Heart left ventricle (tissue), 16 donors: ENCODE measurements at regions of chr18 and their contacts with region 1.

Region 1: DNA sequence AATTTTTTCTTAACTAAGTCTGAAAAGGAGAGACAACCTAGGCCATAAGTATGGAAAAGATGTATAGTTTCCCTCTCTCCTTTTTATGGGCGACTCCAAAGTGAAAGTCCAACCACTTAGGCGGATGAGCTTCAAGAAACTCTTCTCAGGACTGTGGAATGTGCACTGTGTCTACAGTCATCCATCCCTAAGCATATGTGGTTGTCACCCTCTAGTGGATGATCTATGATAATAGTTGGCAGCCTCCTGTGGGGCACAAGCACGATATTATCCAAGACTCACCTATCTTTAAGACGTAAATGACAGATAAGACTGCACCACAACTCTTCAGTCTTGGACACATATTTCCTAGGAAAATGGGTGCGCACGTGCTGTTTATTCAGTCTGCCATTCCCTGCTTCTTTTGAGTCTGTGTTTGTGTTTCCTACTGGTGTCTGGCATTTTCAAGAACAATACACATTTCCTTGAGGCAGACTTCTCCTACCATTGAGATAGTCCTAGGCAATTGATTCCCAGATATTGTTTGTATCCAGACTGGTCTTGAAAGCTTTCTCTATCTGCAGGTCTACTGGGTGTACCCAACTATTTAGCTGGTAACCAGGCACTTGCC is 145.5 kb upstream of the CTAGE1 start:
- DNase-seq: peak in 2 of 5 donors; percentile 50 to 64
- ATAC-seq: peak; percentile 72 to 80 (median 76)
- H3K4me3 ChIP-seq: peak overlapping the region; percentile 10 to 65 (median 54)
- H3K27ac ChIP-seq: peak overlapping the region; percentile 91 to 99 (median 98)
- H3K4me1 ChIP-seq: peaks cover 0 to 24% (median 7%) of the 10 kb centered on the region in 12 donors
- H3K27me3 ChIP-seq: peaks cover 0 to 28% (median 0%) of the 10 kb centered on the region in 9 donors
- CTCF ChIP-seq: peak; percentile 60 to 85 (median 82)
- POLR2A ChIP-seq: peak in 1 of 2 donors; percentile 34

Region 2: DNA sequence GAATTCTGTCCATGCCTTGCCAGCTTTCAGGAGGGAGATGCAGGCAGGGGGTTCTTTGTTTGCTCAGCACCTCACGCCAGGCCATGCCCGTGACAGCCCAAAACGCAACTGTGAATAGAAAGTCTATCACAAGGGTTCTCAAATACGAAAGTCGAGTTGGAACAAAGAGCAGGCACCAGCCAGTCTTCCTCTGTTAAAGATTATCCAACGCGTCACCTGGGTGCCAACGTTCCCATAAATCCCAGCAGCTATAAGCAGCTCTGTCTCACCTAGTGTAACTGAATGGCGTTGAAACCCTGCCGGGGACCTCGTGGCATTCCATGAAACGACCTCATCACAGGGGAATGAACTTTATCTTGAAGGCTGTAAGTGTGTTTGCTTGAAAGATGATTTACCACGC is 478.7 kb before region 1 on chr18:
- intact Hi-C with region 1: loop called in 1 of 10 experiments (anchors 10 kb)
- DNase-seq: peak in 4 of 5 donors; percentile 60 to 68 (median 68)
- ATAC-seq: peak; percentile 55 to 86 (median 80)
- H3K4me3 ChIP-seq: no peak overlapping the region
- H3K27ac ChIP-seq: peak overlapping the region in 9 of 12 donors; percentile 49 to 86 (median 62)
- H3K4me1 ChIP-seq: peaks cover 0 to 22% (median 4%) of the 10 kb centered on the region in 12 donors
- H3K27me3 ChIP-seq: no peaks in the 10 kb centered on the region
- CTCF ChIP-seq: no peak
- POLR2A ChIP-seq: no peak

Region 3: GRCh38 chr18:22194151-22194598 is 369.0 kb before region 1 on chr18:
- intact Hi-C with region 1: loop called in 2 of 10 experiments (anchors 5 kb)
- DNase-seq: peak in 3 of 5 donors; percentile 51 to 60 (median 55)
- ATAC-seq: peak; percentile 18 to 68 (median 50)
- H3K4me3 ChIP-seq: peak overlapping the region in 8 of 12 donors; percentile 3 to 40 (median 8)
- H3K27ac ChIP-seq: peak overlapping the region; percentile 11 to 100 (median 81)
- H3K4me1 ChIP-seq: peaks cover 8 to 98% (median 70%) of the 10 kb centered on the region in 12 donors
- H3K27me3 ChIP-seq: no peaks in the 10 kb centered on the region
- CTCF ChIP-seq: no peak
- POLR2A ChIP-seq: no peak

Region 4: GRCh38 chr18:22324191-22325131 is 238.7 kb before region 1 on chr18:
- intact Hi-C with region 1: loop called in 2 of 10 experiments (anchors 2 to 10 kb)
- DNase-seq: peak; percentile 72 to 90 (median 83)
- ATAC-seq: peak; percentile 85 to 90 (median 86)
- H3K4me3 ChIP-seq: peak overlapping the region in 10 of 12 donors; percentile 1 to 49 (median 34)
- H3K27ac ChIP-seq: peak overlapping the region; percentile 17 to 80 (median 62)
- H3K4me1 ChIP-seq: peaks cover 0 to 32% (median 12%) of the 10 kb centered on the region in 12 donors
- H3K27me3 ChIP-seq: no peaks in the 10 kb centered on the region
- CTCF ChIP-seq: peak in 7 of 12 donors; percentile 12 to 46 (median 42)
- POLR2A ChIP-seq: no peak

Region 5: DNA sequence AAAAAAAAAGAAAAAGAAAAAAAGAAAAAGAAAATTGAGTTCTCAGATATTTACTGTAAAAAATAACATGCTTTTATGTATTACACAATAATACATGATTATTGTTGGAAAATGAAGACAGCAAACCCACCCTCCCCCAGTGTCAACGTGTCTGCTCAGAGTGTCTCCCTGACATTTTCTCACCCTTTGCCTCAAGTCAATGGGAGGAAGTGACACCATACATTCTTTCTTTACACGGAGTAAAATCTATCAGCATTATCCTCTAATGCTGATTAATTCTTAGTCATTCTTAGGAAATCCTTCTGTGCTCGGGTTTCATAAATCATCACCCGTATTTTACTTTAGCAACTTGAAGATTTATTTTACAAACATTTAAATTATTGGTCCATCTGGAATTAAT is 177.5 kb before region 1 on chr18:
- intact Hi-C with region 1: loop called in 1 of 10 experiments (anchors 10 kb)
- DNase-seq: no peak
- ATAC-seq: peak in 1 of 4 donors; percentile 33
- H3K4me3 ChIP-seq: no peak overlapping the region
- H3K27ac ChIP-seq: no peak overlapping the region
- H3K4me1 ChIP-seq: peaks cover 0 to 16% (median 5%) of the 10 kb centered on the region in 12 donors
- H3K27me3 ChIP-seq: no peaks in the 10 kb centered on the region
- CTCF ChIP-seq: no peak
- POLR2A ChIP-seq: no peak

Region 6: GRCh38 chr18:22471546-22472131 is 91.6 kb before region 1 on chr18:
- intact Hi-C with region 1: loop called in 7 of 10 experiments (anchors 2 to 10 kb)
- DNase-seq: peak in 4 of 5 donors; percentile 74 to 89 (median 82)
- ATAC-seq: peak; percentile 88 to 95 (median 92)
- H3K4me3 ChIP-seq: no peak overlapping the region
- H3K27ac ChIP-seq: peak overlapping the region; percentile 58 to 97 (median 85)
- H3K4me1 ChIP-seq: peaks cover 0 to 53% (median 42%) of the 10 kb centered on the region in 12 donors
- H3K27me3 ChIP-seq: no peaks in the 10 kb centered on the region
- CTCF ChIP-seq: no peak
- POLR2A ChIP-seq: peak in 1 of 2 donors; percentile 33

Region 7: DNA sequence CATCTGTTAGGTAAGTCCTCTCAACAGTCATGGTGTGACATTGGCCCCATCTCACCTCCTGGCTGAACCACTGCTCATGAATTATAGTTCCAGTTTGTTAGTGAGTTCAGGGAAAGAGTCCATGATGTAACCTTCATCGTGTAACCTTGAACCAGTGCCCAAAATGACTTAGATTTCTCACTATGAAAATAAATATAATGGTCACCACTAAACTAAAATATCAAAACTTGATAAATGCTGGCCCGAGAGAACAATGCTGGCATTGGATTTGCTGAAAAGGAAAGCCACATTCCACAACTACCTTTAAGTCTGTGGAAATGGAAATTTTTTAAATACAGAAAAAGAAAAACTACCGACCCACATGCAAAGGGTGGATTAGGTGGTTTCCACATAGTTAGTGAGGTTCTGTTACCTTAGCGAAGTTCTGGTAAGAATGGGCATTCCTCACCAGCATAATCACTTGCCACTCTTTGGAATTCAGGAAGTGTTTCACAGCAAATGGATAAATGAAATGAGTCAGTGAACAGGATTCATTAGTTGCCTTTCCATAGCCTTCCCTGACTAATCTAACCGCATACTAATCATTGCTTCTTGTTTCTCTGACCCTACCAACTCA is 11.6 kb before region 1 on chr18:
- intact Hi-C with region 1: no loop called
- DNase-seq: no peak
- ATAC-seq: peak in 2 of 4 donors; percentile 36 to 40
- H3K4me3 ChIP-seq: no peak overlapping the region
- H3K27ac ChIP-seq: peak overlapping the region in 4 of 12 donors; percentile 9 to 24 (median 20)
- H3K4me1 ChIP-seq: peaks cover 0 to 36% (median 14%) of the 10 kb centered on the region in 12 donors
- H3K27me3 ChIP-seq: no peaks in the 10 kb centered on the region
- CTCF ChIP-seq: no peak
- POLR2A ChIP-seq: no peak